ENCODE measurements at regions of chr19 and their contacts with region 1.

Region 1: GRCh38 chr19:39428283-39429112 is 7.3 kb downstream of the RPS16 start:
- DNase-seq: no peak
- H3K4me3 ChIP-seq: no peak overlapping the region
- H3K27ac ChIP-seq: no peak overlapping the region
- H3K4me1 ChIP-seq: no peaks in the 10 kb centered on the region
- H3K27me3 ChIP-seq: no peaks in the 10 kb centered on the region
- CTCF ChIP-seq: no peak

Region 2: DNA sequence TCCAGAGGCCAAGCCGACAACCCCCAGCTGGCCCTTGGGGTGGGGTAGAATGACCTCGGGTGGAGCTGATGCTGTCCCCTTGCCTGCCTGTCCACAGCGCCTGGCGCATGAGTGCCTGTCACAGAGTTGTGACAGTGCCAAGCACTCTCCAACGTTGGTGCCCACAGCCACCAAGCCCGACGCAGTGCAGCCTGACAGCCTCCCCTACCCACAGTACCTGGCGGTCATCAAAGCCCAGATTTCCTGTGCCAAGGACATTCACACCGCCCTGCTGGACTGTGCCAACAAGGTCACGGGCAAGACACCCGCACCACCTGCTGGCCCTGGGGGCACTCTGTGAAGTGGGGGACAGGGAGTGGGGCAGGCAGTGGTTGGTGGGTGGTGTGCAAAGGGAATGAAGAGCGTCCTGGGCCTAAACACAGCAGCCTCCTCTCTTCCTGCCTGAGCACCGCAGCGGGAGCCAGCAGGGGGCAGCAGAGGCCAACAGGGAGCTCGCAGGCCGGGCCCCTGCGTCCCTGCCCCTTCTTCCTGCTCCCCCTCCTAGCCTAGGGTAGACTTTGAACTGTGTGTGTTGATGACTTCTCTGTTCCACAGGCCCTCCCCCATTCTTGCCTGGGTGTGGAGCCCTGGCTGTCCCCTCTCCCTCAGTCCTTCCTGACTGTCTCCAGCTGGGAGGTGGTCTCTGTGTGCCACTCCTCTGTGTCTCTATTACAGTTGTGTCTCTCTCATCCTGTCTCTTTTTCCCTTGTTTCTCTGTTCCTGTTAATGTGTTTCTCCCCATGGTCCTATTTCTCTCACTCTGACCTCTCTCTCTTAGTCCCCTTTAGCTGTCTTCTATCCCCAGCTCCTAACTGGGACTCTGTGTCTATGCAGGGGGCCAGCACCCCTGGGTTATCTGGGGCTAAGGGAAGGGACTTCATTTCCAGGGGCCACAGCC is 30.9 kb before region 1 on chr19:
- CTCF ChIA-PET with region 1: no interaction called
- dilution Hi-C with region 1: no loop called
- in situ Hi-C with region 1: no loop called
- intact Hi-C with region 1: no loop called
- DNase-seq: peak; percentile 75
- H3K4me3 ChIP-seq: no peak overlapping the region
- H3K27ac ChIP-seq: peak overlapping the region; percentile 97
- H3K4me1 ChIP-seq: peaks cover 32% of the 10 kb centered on the region
- H3K27me3 ChIP-seq: no peaks in the 10 kb centered on the region
- CTCF ChIP-seq: peak; percentile 97 to 99

Region 3: GRCh38 chr19:39474139-39474622 is 45.7 kb after region 1 on chr19:
- CTCF ChIA-PET with region 1: no interaction called
- dilution Hi-C with region 1: loop called (anchors 5 kb)
- in situ Hi-C with region 1: no loop called
- intact Hi-C with region 1: no loop called
- DNase-seq: no peak
- H3K4me3 ChIP-seq: no peak overlapping the region
- H3K27ac ChIP-seq: no peak overlapping the region
- H3K4me1 ChIP-seq: no peaks in the 10 kb centered on the region
- H3K27me3 ChIP-seq: no peaks in the 10 kb centered on the region
- CTCF ChIP-seq: peak; percentile 66 to 89

Measured in mammary epithelial cell (primary cell).